ENCODE measurements at regions of chr3 and their contacts with region 1.

Region 1: DNA sequence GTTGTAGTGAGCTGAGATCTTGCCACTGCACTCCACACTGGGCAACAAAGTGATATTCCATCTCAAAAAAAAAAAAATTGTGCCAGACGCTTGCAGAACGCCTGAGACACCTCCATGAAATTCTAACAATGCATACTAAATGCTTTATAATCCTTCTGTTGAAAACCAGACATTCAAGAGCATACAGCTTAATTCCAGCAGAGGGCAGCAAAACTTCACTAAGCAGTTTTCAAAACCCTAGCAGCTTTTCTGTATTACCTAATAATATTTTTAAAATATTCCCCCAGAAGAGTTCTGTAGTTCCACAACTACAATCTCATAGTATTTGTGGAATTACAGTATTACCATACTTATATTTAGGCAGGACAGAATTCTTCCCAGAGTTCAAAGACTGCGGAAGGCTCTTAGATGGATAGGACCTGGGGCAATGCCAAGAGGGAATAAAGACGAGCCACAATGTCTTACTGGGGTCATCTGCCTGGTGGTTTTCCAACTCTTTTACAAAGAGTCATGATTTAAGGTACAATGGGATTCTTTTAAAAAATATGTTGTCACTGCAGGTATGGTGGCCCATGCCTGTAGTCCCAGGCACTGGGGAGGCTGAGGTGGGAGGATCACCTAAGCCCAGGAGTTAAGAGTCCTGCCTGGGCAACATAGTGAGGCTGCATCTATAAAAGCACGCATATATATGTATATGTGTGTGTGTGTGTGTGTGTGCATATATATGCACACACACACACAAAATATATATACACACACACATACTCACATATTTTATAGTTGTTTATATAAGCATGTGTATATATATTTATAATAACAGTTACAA is 19.6 kb upstream of the TASOR start:
- DNase-seq: peak; percentile 44
- H3K4me3 Mint-ChIP-seq: no peak overlapping the region
- H3K27ac Mint-ChIP-seq: no peak overlapping the region
- H3K4me1 Mint-ChIP-seq: peaks cover 18% of the 10 kb centered on the region
- H3K27me3 Mint-ChIP-seq: peaks cover 2% of the 10 kb centered on the region

Region 2: GRCh38 chr3:56988458-56989168 is 285.9 kb after region 1 on chr3:
- CTCF ChIA-PET with region 1: interaction called, 182 read pairs
- POLR2A ChIA-PET with region 1: interaction called, 16 read pairs
- DNase-seq: peak; percentile 69
- H3K4me3 Mint-ChIP-seq: no peak overlapping the region
- H3K27ac Mint-ChIP-seq: no peak overlapping the region
- H3K4me1 Mint-ChIP-seq: peaks cover 14% of the 10 kb centered on the region
- H3K27me3 Mint-ChIP-seq: peaks cover 16% of the 10 kb centered on the region

Region 3: DNA sequence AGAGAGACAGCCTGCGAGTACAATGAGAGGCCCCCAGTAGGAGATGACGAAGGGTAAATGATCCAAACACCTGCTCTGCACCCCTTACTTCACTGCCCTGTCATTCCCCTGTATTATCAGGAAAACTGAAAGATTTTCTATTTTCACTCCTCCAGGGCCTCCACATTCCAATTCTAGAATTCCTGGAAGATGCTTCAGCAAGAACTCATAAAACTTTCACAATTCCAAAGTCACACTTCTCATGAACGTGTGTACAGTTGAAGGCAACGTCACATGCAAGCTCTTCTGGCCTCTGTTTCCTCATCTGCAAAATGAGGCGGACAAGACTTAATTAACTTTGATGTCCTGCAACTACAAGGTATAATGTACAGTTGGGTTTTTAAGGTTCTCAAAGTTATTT is 295.0 kb after region 1 on chr3:
- CTCF ChIA-PET with region 1: interaction called, 182 read pairs
- POLR2A ChIA-PET with region 1: interaction called, 5 read pairs
- DNase-seq: no peak
- H3K4me3 Mint-ChIP-seq: no peak overlapping the region
- H3K27ac Mint-ChIP-seq: no peak overlapping the region
- H3K4me1 Mint-ChIP-seq: peaks cover 2% of the 10 kb centered on the region
- H3K27me3 Mint-ChIP-seq: peaks cover 7% of the 10 kb centered on the region

Measured in activated CD4-positive, alpha-beta memory T cell treated with anti-CD3 and anti-CD28 coated beads, Interleukin-2, amount 10 ng/mL, durations not matched to agents 7 days and 5 days (primary cell).